ENCODE measurements at regions of chr14 and their contacts with region 1.

Region 1: DNA sequence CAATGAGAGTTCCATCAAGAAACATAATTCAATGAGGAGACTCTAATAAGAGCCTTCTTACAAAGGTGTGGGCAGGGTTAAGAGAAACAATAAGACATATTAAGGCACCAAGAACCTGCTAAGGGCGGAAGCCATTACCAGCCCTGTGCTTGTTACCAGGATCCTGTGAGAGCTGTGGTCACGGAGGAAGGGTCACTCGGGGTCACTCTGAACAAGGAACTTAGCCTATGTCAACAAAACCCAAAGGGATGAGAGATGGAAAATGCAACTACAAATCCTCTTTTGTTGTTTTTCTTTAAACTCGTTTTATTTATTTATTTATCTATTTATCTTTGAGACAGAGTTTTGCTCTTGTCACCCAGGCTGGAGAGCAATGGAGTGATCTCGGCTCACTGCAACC is 460.4 kb upstream of the CCDC196 start:
- DNase-seq: no peak
- ATAC-seq: no peak
- H3K4me3 ChIP-seq: no peak overlapping the region
- H3K4me3 Mint-ChIP-seq: no peak overlapping the region
- H3K27ac ChIP-seq: no peak overlapping the region
- H3K27ac Mint-ChIP-seq: no peak overlapping the region
- H3K4me1 ChIP-seq: no peaks in the 10 kb centered on the region
- H3K4me1 Mint-ChIP-seq: no peaks in the 10 kb centered on the region
- H3K27me3 ChIP-seq: no peaks in the 10 kb centered on the region
- H3K27me3 Mint-ChIP-seq: peaks cover 6 to 13% of the 10 kb centered on the region in 2 donors
- CTCF ChIP-seq: no peak

Region 2: GRCh38 chr14:65637780-65638179 is 388.0 kb before region 1 on chr14:
- intact Hi-C with region 1: loop called (anchors 5 kb)
- DNase-seq: peak; percentile 17 to 51
- ATAC-seq: peak; percentile 86 to 94 (median 90)
- H3K4me3 ChIP-seq: no peak overlapping the region
- H3K4me3 Mint-ChIP-seq: peak overlapping the region; percentile 55
- H3K27ac ChIP-seq: no peak overlapping the region
- H3K27ac Mint-ChIP-seq: peak overlapping the region; percentile 41 to 81
- H3K4me1 ChIP-seq: peaks cover 10% of the 10 kb centered on the region
- H3K4me1 Mint-ChIP-seq: peaks cover 30 to 31% of the 10 kb centered on the region in 2 donors
- H3K27me3 ChIP-seq: no peaks in the 10 kb centered on the region
- H3K27me3 Mint-ChIP-seq: no peaks in the 10 kb centered on the region
- CTCF ChIP-seq: no peak

Measured in natural killer cell (primary cell).